K562 (cell line): ENCODE measurements at regions of chr17 and their contacts with region 1.

Region 1: DNA sequence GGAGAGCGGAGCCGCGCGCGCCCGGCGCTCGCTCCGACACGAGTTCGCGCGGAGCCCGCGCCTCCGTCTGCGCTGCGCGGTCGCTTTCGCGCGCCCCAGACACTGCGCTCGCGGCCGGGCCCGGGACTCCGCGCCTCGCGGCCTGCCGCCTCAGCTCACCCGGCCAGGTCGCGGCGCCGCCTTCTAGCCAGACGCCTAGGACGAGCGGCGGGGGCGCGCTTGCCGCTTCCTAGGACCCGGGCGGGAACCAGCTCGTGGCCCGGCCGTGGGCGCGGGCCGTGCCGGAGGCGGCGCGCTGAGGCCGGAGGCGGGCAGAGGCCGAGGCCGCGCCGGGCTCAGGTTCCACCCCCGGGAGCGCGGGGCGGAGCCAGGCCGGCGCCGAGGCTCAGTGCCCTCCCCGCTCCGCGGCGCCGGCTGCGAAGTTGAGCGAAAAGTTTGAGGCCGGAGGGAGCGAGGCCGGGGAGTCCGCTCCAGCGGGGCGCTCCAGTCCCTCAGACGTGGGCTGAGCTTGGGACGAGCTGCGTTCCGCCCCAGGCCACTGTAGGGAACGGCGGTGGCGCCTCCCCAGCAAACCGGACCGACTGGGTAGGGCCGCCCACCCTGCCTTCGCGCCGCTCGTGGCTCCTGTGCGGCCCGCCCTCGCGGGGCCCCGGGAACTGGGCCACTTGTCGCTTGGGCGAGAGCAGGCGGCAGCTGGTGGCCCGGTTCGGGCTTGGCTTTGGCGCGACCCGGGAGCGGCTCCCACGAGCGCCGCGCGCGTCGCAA is at the start of gene SPHK1:
- DNase-seq: peak; percentile 87 to 92 (median 90)
- ATAC-seq: peak; percentile 80
- H3K4me3 ChIP-seq: peak within 1 kb of the TSS; percentile 74
- H3K27ac ChIP-seq: peak within 1 kb of the TSS; percentile 93
- H3K4me1 ChIP-seq: peaks cover 14 to 66% of the 10 kb centered on the region in 2 experiments
- H3K27me3 ChIP-seq: no peaks in the 10 kb centered on the region
- CTCF ChIP-seq: no peak
- EP300 ChIP-seq: no peak
- POLR2A ChIP-seq: peak; percentile 80
- RAD21 ChIP-seq: no peak
- polyA plus RNA-seq, gene SPHK1: 0.21 to 1.9 TPM

Region 2: DNA sequence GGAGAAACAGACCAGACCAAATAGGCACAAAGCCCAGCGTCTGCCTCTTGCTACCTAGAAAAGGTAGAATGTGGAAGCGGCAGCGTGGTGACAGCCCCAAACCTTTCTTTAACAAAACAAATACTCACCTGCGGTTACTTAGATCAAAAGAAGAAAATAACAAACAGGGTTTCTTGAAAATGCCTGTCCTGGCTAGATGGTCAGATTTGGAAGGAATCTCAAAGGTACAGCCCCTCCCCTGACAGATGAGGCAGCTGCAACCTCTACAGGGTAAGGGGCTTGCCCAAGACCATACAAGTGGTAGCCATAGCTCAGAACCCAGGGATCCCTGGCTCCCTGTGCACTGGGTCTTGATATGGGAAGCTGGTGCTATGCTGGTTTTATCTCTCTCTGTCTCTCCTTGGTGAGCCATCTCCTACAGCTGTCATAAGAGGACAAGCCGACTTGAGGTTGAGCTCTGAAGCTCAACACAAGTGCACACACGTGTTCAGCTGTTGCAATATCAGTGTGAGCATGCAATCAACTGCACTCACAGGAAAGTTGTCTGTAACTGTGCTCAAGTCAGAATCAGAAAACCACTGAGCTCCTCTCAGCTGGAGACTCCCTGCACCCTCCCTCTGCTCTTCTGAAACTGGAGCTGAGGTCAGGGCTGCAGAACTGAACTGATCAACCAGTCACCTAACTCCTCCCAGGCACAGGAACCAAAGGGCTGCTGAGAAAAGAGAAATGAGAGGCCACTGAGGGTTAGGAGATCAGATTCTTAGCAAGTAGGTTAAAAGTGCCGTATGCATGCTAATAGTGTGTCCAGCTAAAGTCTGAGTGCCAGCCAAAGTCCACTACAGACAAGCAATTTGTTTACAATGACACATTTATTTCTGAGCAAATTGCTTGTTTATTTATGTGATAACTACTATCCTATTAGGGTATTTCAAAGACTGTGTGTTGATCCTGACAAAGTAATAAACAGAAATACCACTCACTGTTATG is 138.0 kb before region 1 on chr17:
- CTCF ChIA-PET with region 1: no interaction called
- POLR2A ChIA-PET with region 1: no interaction called
- in situ Hi-C with region 1: no loop called
- intact Hi-C with region 1: no loop called
- DNase-seq: peak in 2 of 4 experiments; percentile 41 to 60
- ATAC-seq: peak; percentile 92
- H3K4me3 ChIP-seq: no peak overlapping the region
- H3K27ac ChIP-seq: peak overlapping the region; percentile 24; the same call in 2 of the 3 replicates
- H3K4me1 ChIP-seq: peaks cover 21 to 29% of the 10 kb centered on the region in 2 experiments
- H3K27me3 ChIP-seq: no peaks in the 10 kb centered on the region
- CTCF ChIP-seq: no peak
- EP300 ChIP-seq: peak; percentile 37
- POLR2A ChIP-seq: no peak
- RAD21 ChIP-seq: peak in 1 of 2 experiments; percentile 21; a peak in 2 of 4 replicates

Region 3: DNA sequence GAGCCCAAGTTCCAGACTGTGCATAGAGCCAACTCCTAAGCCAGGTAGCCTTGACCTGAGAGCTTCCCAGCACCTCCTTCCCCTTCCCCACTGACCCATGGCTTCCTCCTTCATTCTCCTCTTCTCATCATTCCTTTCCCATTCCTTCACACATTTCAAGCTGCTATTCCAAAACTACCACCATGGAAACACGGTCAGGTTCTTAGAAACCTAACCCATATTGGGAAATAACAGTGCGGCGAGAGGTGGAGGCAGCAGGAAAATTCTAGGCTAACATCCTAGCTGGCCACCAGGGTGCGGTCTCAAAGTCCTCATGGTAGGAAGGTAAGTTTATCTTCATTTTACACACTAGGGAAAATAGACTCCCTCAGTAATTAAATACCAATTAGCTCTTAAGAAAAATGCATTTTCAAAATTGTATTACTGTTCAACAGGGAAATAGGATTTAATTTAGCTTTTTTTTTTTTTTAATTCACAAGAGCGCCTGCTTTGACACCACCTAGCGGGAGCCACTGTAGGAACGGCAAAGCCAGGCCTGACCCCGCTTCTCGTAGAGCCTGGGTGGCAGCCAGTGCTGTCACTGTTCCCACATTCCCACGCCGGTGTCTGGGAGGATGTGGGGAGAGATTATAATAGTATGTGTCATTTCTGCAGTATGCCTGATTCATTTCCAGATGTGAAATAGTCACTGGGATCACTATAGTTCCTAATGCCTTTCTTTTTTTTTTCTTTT is 14.0 kb before region 1 on chr17:
- CTCF ChIA-PET with region 1: interaction called, 7 read pairs
- POLR2A ChIA-PET with region 1: interaction called, 11 read pairs
- in situ Hi-C with region 1: no loop called
- intact Hi-C with region 1: no loop called
- DNase-seq: peak; percentile 56 to 67 (median 58)
- ATAC-seq: peak; percentile 83
- H3K4me3 ChIP-seq: no peak overlapping the region
- H3K27ac ChIP-seq: no peak overlapping the region; the same call in 2 of the 3 replicates
- H3K4me1 ChIP-seq: peaks cover 4 to 20% of the 10 kb centered on the region in 2 experiments; a peak in 4 of 5 replicates
- H3K27me3 ChIP-seq: no peaks in the 10 kb centered on the region
- CTCF ChIP-seq: peak; percentile 75 to 92 (median 85)
- EP300 ChIP-seq: no peak
- POLR2A ChIP-seq: no peak
- RAD21 ChIP-seq: peak; percentile 20 to 45; a peak in 3 of 4 replicates

Region 4: DNA sequence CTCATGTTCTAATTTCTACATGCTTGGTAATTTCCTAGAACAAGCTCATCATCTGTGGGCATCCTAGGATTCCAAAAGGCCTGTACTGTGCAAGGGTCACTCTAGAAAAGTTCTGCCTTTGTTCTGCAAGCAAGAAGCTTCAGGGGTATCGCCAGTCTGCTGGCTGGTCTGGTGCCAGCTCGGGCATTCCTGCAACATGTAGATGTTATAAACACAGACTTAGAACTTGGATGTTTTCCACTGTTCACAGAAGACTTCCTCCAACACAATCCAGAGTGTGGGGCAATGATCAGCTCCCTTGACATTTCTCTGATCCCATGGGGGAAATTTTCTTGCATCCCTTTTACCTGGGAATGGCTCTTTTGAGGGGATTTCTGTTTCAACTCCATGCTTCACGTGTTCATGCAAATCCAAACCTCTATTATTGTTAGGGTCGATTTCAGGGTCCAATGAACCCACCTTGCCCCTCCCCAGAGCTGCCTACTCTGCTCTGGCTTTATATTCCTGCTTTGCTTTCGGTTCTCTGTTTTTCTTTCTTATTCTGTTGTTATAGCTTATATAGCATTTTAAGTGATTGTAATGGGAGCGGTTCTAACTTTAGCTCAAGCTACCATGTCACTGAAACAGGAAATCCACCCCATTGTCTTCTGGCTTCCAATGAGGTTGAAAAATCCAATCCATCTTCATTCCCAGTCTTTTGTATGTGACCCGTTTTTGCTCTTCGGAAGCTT is 43.3 kb after region 1 on chr17:
- CTCF ChIA-PET with region 1: no interaction called
- POLR2A ChIA-PET with region 1: no interaction called
- in situ Hi-C with region 1: no loop called
- intact Hi-C with region 1: no loop called
- DNase-seq: no peak
- ATAC-seq: no peak
- H3K4me3 ChIP-seq: no peak overlapping the region
- H3K27ac ChIP-seq: no peak overlapping the region
- H3K4me1 ChIP-seq: no peaks in the 10 kb centered on the region; a peak in 2 of 5 replicates
- H3K27me3 ChIP-seq: no peaks in the 10 kb centered on the region
- CTCF ChIP-seq: no peak
- EP300 ChIP-seq: no peak
- POLR2A ChIP-seq: no peak
- RAD21 ChIP-seq: no peak

Region 5: DNA sequence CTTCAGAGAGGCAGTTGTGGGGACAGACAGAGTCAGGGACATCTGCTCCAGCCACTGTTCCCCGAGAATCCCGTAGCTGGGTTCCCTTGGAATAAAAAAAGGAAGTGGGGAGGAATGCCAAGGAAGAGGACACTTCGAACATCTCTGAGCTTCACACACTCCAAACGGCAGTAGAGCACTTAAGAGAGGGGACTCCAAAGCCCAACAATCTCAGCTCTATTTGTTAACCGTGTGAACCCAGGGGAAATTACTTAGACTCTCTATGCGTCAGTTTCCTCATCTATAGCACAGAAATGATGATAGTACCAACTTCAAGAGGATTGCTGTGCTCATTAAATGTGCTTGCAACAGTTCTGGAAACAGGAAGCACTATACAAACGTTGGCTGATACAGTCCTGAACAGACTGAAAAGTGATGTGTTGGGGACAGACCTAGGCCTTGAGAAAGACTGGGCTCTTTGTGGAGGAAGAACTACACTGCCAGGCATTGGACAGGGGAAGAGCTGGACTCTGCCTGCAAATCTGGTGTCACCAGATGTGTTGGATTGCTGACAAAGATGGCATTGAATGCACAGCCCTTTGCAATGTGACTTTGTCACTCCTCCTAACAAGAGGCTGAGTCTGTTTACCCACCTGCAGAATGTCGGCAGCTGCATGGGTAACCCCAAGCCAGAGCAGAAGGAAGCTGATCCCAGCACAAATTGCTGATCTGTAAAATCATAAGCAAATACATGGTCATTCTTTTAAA is 213.5 kb after region 1 on chr17:
- CTCF ChIA-PET with region 1: no interaction called
- POLR2A ChIA-PET with region 1: no interaction called
- in situ Hi-C with region 1: no loop called
- intact Hi-C with region 1: no loop called
- DNase-seq: no peak
- ATAC-seq: no peak
- H3K4me3 ChIP-seq: no peak overlapping the region
- H3K27ac ChIP-seq: no peak overlapping the region
- H3K4me1 ChIP-seq: peaks cover 21 to 30% of the 10 kb centered on the region in 2 experiments
- H3K27me3 ChIP-seq: no peaks in the 10 kb centered on the region
- CTCF ChIP-seq: no peak
- EP300 ChIP-seq: no peak
- POLR2A ChIP-seq: no peak
- RAD21 ChIP-seq: no peak